A549 (cell line): ENCODE measurements at regions of chr12 and their contacts with region 1.

Region 1: GRCh38 chr12:65602610-65603295 is 221.5 kb upstream of the HMGA2 start:
- DNase-seq: peak; percentile 87 to 89
- ATAC-seq: peak; percentile 95 to 99
- H3K4me3 ChIP-seq: peak overlapping the region; percentile 39
- H3K27ac ChIP-seq: peak overlapping the region; percentile 66 to 79
- H3K4me1 ChIP-seq: peaks cover 20% of the 10 kb centered on the region
- CTCF ChIP-seq: peak; percentile 90
- EP300 ChIP-seq: peak in 1 of 2 experiments; percentile 38; a peak in 1 of 5 replicates
- POLR2A ChIP-seq: no peak
- RAD21 ChIP-seq: peak; percentile 92 to 97

Region 2: DNA sequence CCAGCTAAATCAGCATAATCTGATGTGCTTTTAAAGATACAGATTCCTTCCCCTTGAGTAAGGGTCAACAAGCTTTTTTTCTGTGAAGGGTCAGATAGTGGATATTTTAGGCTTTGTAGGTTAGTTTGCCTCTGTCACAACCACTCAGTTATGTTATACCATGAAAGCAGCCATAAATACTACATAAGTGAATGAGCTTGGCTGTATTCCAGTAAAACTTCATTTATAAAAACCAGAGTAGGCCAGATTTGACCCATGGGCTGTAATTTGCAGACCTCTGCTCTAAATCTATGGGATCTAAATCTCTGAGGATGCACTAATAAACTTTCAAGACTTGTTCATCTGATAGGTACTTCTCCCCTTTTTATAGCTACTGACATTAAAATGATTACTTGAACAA is 385.7 kb before region 1 on chr12:
- CTCF ChIA-PET with region 1: no interaction called
- POLR2A ChIA-PET with region 1: no interaction called
- DNase-seq: no peak
- ATAC-seq: no peak
- H3K4me3 ChIP-seq: no peak overlapping the region
- H3K27ac ChIP-seq: no peak overlapping the region
- H3K4me1 ChIP-seq: no peaks in the 10 kb centered on the region
- CTCF ChIP-seq: no peak
- EP300 ChIP-seq: no peak
- POLR2A ChIP-seq: no peak
- RAD21 ChIP-seq: no peak

Region 3: DNA sequence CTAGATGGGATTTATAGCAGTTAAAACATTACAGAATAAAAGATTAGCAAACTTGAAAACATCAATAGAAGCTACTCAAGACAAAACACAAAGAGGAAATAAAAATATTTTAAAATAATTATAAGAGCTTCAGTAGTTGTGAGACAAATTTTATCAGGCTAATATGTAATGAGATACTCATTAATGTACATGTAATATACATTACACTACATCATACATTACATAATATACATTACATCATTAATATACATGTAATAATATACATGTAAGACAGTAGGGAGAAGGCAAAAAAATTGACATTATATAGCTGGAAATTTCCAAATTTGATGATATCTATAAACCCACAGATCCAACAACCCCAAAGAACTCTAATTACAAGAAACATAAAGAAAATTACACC is 27.9 kb before region 1 on chr12:
- CTCF ChIA-PET with region 1: interaction called, 12 read pairs
- POLR2A ChIA-PET with region 1: no interaction called
- DNase-seq: no peak
- ATAC-seq: no peak
- H3K4me3 ChIP-seq: no peak overlapping the region
- H3K27ac ChIP-seq: no peak overlapping the region
- H3K4me1 ChIP-seq: no peaks in the 10 kb centered on the region
- CTCF ChIP-seq: no peak
- EP300 ChIP-seq: no peak
- POLR2A ChIP-seq: no peak
- RAD21 ChIP-seq: no peak

Region 4: GRCh38 chr12:65649126-65649525 is 46.4 kb after region 1 on chr12:
- CTCF ChIA-PET with region 1: interaction called, 10 read pairs
- POLR2A ChIA-PET with region 1: no interaction called
- DNase-seq: peak; percentile 72 to 94
- ATAC-seq: peak; percentile 99 to 100
- H3K4me3 ChIP-seq: no peak overlapping the region
- H3K27ac ChIP-seq: peak overlapping the region; percentile 81
- H3K4me1 ChIP-seq: peaks cover 18% of the 10 kb centered on the region
- CTCF ChIP-seq: no peak
- EP300 ChIP-seq: peak; percentile 54 to 71; a peak in 2 of 5 replicates
- POLR2A ChIP-seq: no peak
- RAD21 ChIP-seq: peak; percentile 18 to 30; a peak in 2 of 5 replicates

Region 5: DNA sequence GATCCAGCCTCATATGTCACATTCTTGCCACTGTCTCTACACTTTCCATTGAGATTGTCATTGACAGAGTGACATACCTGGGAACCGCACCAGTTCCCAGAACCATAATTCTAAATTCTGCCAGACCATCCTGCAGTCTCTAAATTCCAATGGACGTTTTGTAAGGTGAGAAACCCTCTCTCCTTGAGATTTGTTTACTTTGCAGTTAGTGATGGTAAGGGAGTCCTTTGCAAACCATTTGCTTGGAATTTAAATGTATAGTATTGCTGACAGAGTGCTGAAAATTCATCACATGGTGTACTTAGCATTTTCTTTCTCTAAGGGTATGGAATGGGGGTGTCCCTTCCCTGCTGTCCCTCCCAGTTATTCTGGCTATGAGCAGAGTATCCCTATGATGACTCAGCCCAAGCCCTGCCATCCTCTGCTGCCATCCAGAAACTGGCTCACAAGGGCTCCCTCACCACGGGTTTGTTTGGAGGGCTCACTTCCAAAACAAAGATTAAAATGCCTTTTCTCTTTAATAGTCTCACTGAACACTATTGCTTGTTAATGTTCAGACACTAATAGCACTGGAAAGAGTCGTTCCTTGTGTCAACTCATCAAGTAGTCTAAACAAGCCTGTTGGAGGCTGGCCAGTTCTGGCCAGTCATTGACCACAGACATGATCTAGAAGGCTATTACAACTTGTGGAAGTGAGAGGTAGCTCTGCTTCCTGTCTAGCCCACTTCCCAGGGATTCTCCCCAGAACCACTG is 92.5 kb after region 1 on chr12:
- CTCF ChIA-PET with region 1: interaction called, 19 read pairs
- POLR2A ChIA-PET with region 1: no interaction called
- DNase-seq: peak; percentile 34 to 90
- ATAC-seq: peak; percentile 93 to 95
- H3K4me3 ChIP-seq: no peak overlapping the region
- H3K27ac ChIP-seq: peak overlapping the region; percentile 60 to 61; a peak in 5 of 6 replicates
- H3K4me1 ChIP-seq: peaks cover 30% of the 10 kb centered on the region
- CTCF ChIP-seq: no peak
- EP300 ChIP-seq: peak; percentile 59 to 63; a peak in 1 of 5 replicates
- POLR2A ChIP-seq: no peak
- RAD21 ChIP-seq: 0 out of 5 replicates have a peak, but pooled peaks of 1 of the 2 experiments have one; percentile 19

Region 6: DNA sequence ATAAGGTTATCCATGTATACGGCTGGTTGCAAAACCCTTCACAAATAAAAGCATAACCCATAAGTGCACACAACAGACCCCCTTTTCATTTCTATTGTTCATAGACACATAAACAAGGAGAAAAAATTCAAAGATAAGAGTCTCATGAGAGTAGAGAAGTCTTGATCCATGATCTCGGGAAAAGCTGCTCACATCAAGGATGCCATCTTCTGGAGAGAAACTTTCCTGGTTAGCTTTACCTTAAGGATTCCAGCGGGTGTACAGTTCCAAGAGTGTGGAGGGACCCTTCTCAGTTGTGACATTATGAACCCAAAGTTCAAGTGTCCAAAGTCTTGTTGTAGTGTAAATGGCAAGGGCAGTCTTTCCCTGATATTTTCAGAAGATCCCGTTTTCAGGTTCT is 383.3 kb after region 1 on chr12:
- CTCF ChIA-PET with region 1: interaction called, 21 read pairs
- POLR2A ChIA-PET with region 1: no interaction called
- DNase-seq: peak in 1 of 2 experiments; percentile 20
- ATAC-seq: peak in 1 of 2 experiments; percentile 43; a peak in 1 of 6 replicates
- H3K4me3 ChIP-seq: no peak overlapping the region
- H3K27ac ChIP-seq: no peak overlapping the region
- H3K4me1 ChIP-seq: no peaks in the 10 kb centered on the region
- CTCF ChIP-seq: peak; percentile 38
- EP300 ChIP-seq: no peak
- POLR2A ChIP-seq: no peak
- RAD21 ChIP-seq: peak; percentile 47 to 63